Aorta (tissue), 5 donors: ENCODE measurements at regions of chr6 and their contacts with region 1.

Region 1: DNA sequence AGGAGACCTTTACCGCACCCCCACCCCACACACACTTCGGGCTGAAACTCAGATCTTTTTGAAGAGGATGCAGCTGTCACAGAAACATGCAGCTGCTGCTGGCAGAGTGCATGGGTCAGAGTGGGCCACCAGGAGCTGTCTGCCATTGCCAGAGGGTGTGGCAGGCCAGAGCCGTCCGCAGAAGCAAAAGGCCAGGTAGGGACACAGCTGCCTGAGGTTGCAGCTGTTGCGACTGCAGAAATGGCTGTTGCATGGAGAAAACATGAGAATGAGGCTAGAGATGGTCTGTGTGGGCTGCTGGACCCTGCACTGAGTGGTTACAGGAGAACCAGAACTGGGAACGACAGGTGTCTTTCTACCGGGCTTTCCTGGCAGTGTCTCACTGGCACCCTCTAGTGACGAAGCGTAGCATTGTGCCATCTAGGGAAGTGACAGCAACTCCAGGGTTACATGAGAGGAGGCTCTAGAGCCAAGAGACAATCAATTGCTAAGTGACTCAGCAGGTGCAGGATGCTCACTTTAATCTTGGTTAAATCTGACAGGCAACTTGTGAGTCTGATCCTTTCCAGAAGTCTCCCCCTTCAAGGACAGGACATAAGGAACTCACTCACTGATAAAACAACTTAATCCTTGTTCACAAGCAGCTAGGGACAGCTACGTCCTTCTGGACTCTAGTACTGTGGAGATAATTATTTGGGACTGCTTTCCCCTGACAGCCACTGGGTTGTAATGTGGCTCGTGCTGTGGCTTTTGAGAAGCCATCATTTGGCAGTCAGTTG is 29.1 kb upstream of the SERPINB9 start:
- DNase-seq: peak; percentile 81 to 89
- ATAC-seq: peak; percentile 85
- H3K4me3 ChIP-seq: no peak overlapping the region
- H3K27ac ChIP-seq: no peak overlapping the region
- H3K4me1 ChIP-seq: no peaks in the 10 kb centered on the region
- H3K27me3 ChIP-seq: no peaks in the 10 kb centered on the region

Region 2: GRCh38 chr6:2791124-2791974 is 140.8 kb before region 1 on chr6:
- intact Hi-C with region 1: loop called in 1 of 2 experiments (anchors 2 kb)
- DNase-seq: peak in 1 of 2 donors; percentile 79
- ATAC-seq: peak; percentile 90
- H3K4me3 ChIP-seq: no peak overlapping the region
- H3K27ac ChIP-seq: peak overlapping the region; percentile 72 to 83
- H3K4me1 ChIP-seq: peaks cover 0 to 2% of the 10 kb centered on the region in 2 donors
- H3K27me3 ChIP-seq: no peaks in the 10 kb centered on the region

Region 3: GRCh38 chr6:2846873-2847224 is 85.3 kb before region 1 on chr6:
- intact Hi-C with region 1: loop called (anchors 2 kb)
- DNase-seq: no peak
- ATAC-seq: no peak
- H3K4me3 ChIP-seq: peak overlapping the region in 1 of 2 donors; percentile 19
- H3K27ac ChIP-seq: peak overlapping the region; percentile 36 to 90
- H3K4me1 ChIP-seq: no peaks in the 10 kb centered on the region
- H3K27me3 ChIP-seq: no peaks in the 10 kb centered on the region

Region 4: GRCh38 chr6:3068329-3069214 is 136.4 kb after region 1 on chr6 and contains the start of gene RIPK1:
- intact Hi-C with region 1: no loop called
- DNase-seq: peak; percentile 95 to 98
- ATAC-seq: peak; percentile 94
- H3K4me3 ChIP-seq: peak within 1 kb of the TSS; percentile 62 to 87
- H3K27ac ChIP-seq: peak within 1 kb of the TSS; percentile 71 to 98
- H3K4me1 ChIP-seq: no peaks in the 10 kb centered on the region
- H3K27me3 ChIP-seq: no peaks in the 10 kb centered on the region
- total RNA-seq, gene RIPK1: 23.1 to 27.3 TPM

Region 5: GRCh38 chr6:3707024-3707423 is 774.9 kb after region 1 on chr6:
- intact Hi-C with region 1: no loop called
- DNase-seq: no peak
- ATAC-seq: no peak
- H3K4me3 ChIP-seq: no peak overlapping the region
- H3K27ac ChIP-seq: no peak overlapping the region
- H3K4me1 ChIP-seq: no peaks in the 10 kb centered on the region
- H3K27me3 ChIP-seq: no peaks in the 10 kb centered on the region